Transverse colon (tissue), 4 donors: ENCODE measurements at regions of chr15 and their contacts with region 1.

Region 1: DNA sequence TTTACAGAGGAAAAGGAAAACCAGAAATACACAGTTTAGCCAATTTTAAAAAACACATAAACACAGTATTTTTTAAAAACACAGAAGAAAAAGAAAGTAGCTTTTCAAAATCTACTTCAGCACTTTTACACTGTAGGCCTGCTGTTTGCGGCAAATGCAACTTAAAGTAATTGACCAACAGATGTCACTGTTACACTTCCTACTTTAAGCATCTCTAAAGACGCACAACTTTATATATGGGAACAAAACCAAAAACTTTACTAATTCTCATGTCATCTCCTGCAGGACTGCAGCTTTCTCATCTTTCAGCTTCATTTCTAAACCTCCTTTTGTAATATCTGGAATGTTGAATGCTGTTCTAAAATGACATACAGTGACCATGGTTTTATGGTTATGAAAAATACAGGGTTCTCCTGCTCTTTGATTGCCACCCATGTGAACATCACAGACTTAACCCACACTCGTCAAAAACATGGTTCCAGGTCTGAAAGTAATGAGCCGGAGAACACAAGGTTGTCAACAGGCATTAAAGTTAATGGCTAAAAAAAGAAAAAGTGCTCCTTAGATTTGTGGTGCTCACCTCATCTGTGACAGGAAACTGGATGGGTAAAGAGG is 107.9 kb downstream of the FMN1 start:
- DNase-seq: no peak
- H3K4me3 ChIP-seq: no peak overlapping the region
- H3K27ac ChIP-seq: no peak overlapping the region
- H3K4me1 ChIP-seq: peaks cover 0 to 35% (median 22%) of the 10 kb centered on the region in 4 donors
- H3K27me3 ChIP-seq: no peaks in the 10 kb centered on the region
- CTCF ChIP-seq: peak; percentile 38 to 58 (median 50)
- EP300 ChIP-seq: no peak
- POLR2A ChIP-seq: no peak

Region 2: GRCh38 chr15:33007303-33007855 is 79.2 kb before region 1 on chr15:
- in situ Hi-C with region 1: no loop called
- intact Hi-C with region 1: no loop called
- DNase-seq: no peak
- H3K4me3 ChIP-seq: no peak overlapping the region
- H3K27ac ChIP-seq: no peak overlapping the region
- H3K4me1 ChIP-seq: peaks cover 0 to 10% (median 0%) of the 10 kb centered on the region in 4 donors
- H3K27me3 ChIP-seq: no peaks in the 10 kb centered on the region
- CTCF ChIP-seq: no peak
- EP300 ChIP-seq: no peak
- POLR2A ChIP-seq: no peak

Region 3: GRCh38 chr15:33043636-33044035 is 43.0 kb before region 1 on chr15:
- in situ Hi-C with region 1: no loop called
- intact Hi-C with region 1: no loop called
- DNase-seq: no peak
- H3K4me3 ChIP-seq: no peak overlapping the region
- H3K27ac ChIP-seq: no peak overlapping the region
- H3K4me1 ChIP-seq: no peaks in the 10 kb centered on the region
- H3K27me3 ChIP-seq: no peaks in the 10 kb centered on the region
- CTCF ChIP-seq: no peak
- EP300 ChIP-seq: no peak
- POLR2A ChIP-seq: no peak

Region 4: DNA sequence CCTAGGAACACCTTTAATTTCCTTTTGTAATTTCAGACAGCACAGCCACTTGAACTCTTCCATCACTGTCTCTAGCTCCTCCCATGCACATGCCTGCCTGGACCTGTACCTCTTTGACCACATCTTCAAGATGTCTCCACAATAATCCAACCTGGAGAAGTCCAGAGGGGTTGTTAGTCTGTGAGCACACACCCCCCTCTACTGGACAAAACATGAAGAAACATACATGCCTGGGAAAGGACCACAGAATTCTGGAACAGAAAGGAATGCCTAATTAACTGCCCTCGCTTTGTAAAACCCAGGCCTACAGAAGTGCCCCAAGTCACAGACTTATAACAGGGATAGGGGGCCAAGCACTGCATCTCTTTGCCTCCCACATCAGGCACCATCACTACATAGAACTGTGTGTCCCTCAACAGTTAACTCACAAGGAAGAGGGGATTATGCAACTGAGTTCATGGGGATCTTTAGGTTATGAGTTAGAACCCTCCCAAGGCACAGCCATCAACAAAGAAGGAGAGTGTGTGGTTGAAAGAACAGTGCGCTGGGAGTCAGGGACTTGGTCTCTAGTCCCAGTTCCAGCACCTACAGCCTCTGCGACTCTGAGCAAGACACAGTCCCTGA is 46.2 kb after region 1 on chr15:
- in situ Hi-C with region 1: loop called in 1 of 4 experiments (anchors 10 kb)
- intact Hi-C with region 1: no loop called
- DNase-seq: peak; percentile 33
- H3K4me3 ChIP-seq: no peak overlapping the region
- H3K27ac ChIP-seq: no peak overlapping the region
- H3K4me1 ChIP-seq: peaks cover 0 to 12% (median 11%) of the 10 kb centered on the region in 4 donors
- H3K27me3 ChIP-seq: no peaks in the 10 kb centered on the region
- CTCF ChIP-seq: peak; percentile 51 to 77 (median 67)
- EP300 ChIP-seq: no peak
- POLR2A ChIP-seq: no peak

Region 5: GRCh38 chr15:33154351-33155166 is 67.9 kb after region 1 on chr15:
- in situ Hi-C with region 1: no loop called
- intact Hi-C with region 1: loop called (anchors 10 kb)
- DNase-seq: peak; percentile 30
- H3K4me3 ChIP-seq: peak overlapping the region in 1 of 4 donors; percentile 26
- H3K27ac ChIP-seq: peak overlapping the region; percentile 25 to 58 (median 54)
- H3K4me1 ChIP-seq: peaks cover 0 to 13% (median 0%) of the 10 kb centered on the region in 4 donors
- H3K27me3 ChIP-seq: no peaks in the 10 kb centered on the region
- CTCF ChIP-seq: no peak
- EP300 ChIP-seq: peak; percentile 36
- POLR2A ChIP-seq: peak; percentile 37

Region 6: GRCh38 chr15:33242669-33243191 is 156.1 kb after region 1 on chr15:
- in situ Hi-C with region 1: no loop called
- intact Hi-C with region 1: no loop called
- DNase-seq: no peak
- H3K4me3 ChIP-seq: no peak overlapping the region
- H3K27ac ChIP-seq: no peak overlapping the region
- H3K4me1 ChIP-seq: no peaks in the 10 kb centered on the region
- H3K27me3 ChIP-seq: no peaks in the 10 kb centered on the region
- CTCF ChIP-seq: peak in 4 of 5 experiments; percentile 13 to 28 (median 24)
- EP300 ChIP-seq: no peak
- POLR2A ChIP-seq: no peak